ENCODE measurements at regions of chr5 and their contacts with region 1.

Region 1: GRCh38 chr5:102715082-102715819 is 39.9 kb upstream of the PAM start:
- DNase-seq: peak; percentile 71
- H3K4me3 Mint-ChIP-seq: no peak overlapping the region
- H3K27ac Mint-ChIP-seq: peak overlapping the region; percentile 80
- H3K4me1 Mint-ChIP-seq: peaks cover 25% of the 10 kb centered on the region
- H3K27me3 Mint-ChIP-seq: no peaks in the 10 kb centered on the region
- CTCF ChIP-seq: no peak

Region 2: GRCh38 chr5:102561894-102562760 is 153.1 kb before region 1 on chr5:
- CTCF ChIA-PET with region 1: no interaction called
- POLR2A ChIA-PET with region 1: no interaction called
- intact Hi-C with region 1: no loop called
- DNase-seq: peak; percentile 57
- H3K4me3 Mint-ChIP-seq: no peak overlapping the region
- H3K27ac Mint-ChIP-seq: no peak overlapping the region
- H3K4me1 Mint-ChIP-seq: no peaks in the 10 kb centered on the region
- H3K27me3 Mint-ChIP-seq: peaks cover 39% of the 10 kb centered on the region
- CTCF ChIP-seq: peak; percentile 42

Region 3: GRCh38 chr5:102737805-102738469 is 22.7 kb after region 1 on chr5:
- CTCF ChIA-PET with region 1: no interaction called
- POLR2A ChIA-PET with region 1: no interaction called
- intact Hi-C with region 1: no loop called
- DNase-seq: no peak
- H3K4me3 Mint-ChIP-seq: no peak overlapping the region
- H3K27ac Mint-ChIP-seq: no peak overlapping the region
- H3K4me1 Mint-ChIP-seq: no peaks in the 10 kb centered on the region
- H3K27me3 Mint-ChIP-seq: no peaks in the 10 kb centered on the region
- CTCF ChIP-seq: no peak

Region 4: GRCh38 chr5:102749416-102750030 is 34.3 kb after region 1 on chr5:
- CTCF ChIA-PET with region 1: no interaction called
- POLR2A ChIA-PET with region 1: interaction called, 22 read pairs
- intact Hi-C with region 1: loop called (anchors 1 kb)
- DNase-seq: no peak
- H3K4me3 Mint-ChIP-seq: no peak overlapping the region
- H3K27ac Mint-ChIP-seq: no peak overlapping the region
- H3K4me1 Mint-ChIP-seq: no peaks in the 10 kb centered on the region
- H3K27me3 Mint-ChIP-seq: no peaks in the 10 kb centered on the region
- CTCF ChIP-seq: no peak

Region 5: GRCh38 chr5:102754767-102755431 is 39.6 kb after region 1 on chr5 and contains the start of gene PAM:
- CTCF ChIA-PET with region 1: no interaction called
- POLR2A ChIA-PET with region 1: interaction called, 22 read pairs
- intact Hi-C with region 1: no loop called
- DNase-seq: peak; percentile 75
- H3K4me3 Mint-ChIP-seq: peak within 1 kb of the TSS; percentile 98
- H3K27ac Mint-ChIP-seq: peak within 1 kb of the TSS; percentile 88
- H3K4me1 Mint-ChIP-seq: peaks cover 22% of the 10 kb centered on the region
- H3K27me3 Mint-ChIP-seq: no peaks in the 10 kb centered on the region
- CTCF ChIP-seq: no peak
- total RNA-seq, gene PAM: 60.3 and 64.3 TPM in 2 replicates